CD4-positive, alpha-beta T cell (primary cell): ENCODE measurements at regions of chr9 and their contacts with region 1.

Region 1: GRCh38 chr9:21455320-21455719 is 15.1 kb downstream of the IFNA1 start:
- DNase-seq: peak in 6 of 14 experiments; percentile 2 to 69 (median 39)
- ATAC-seq: peak; percentile 89
- H3K4me3 ChIP-seq: no peak overlapping the region
- H3K4me3 Mint-ChIP-seq: no peak overlapping the region
- H3K27ac ChIP-seq: no peak overlapping the region
- H3K27ac Mint-ChIP-seq: no peak overlapping the region
- H3K4me1 ChIP-seq: no peaks in the 10 kb centered on the region
- H3K4me1 Mint-ChIP-seq: no peaks in the 10 kb centered on the region
- H3K27me3 ChIP-seq: no peaks in the 10 kb centered on the region
- H3K27me3 Mint-ChIP-seq: peaks cover 24% of the 10 kb centered on the region
- CTCF ChIP-seq: peak; percentile 56

Region 2: DNA sequence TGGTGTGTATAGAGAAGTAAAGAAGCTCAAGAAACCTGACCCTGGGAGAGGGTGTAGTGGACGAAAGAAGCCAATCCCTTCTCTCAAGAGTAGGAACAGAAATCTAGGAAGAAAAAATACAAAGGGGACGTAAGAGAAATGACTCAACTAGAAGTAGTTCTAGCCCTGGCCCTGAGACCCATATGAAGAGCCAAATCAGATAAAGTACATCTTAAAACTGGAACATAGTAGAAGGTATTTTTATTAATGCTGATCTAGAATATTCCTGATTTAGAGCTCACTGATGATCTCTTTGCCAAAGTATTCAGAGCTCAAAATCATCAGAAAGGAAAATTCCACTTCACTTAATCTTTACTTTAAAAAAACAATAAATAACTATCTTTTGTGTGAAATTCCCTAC is 1017.8 kb before region 1 on chr9:
- CTCF ChIA-PET with region 1: no interaction called
- POLR2A ChIA-PET with region 1: no interaction called
- intact Hi-C with region 1: no loop called
- DNase-seq: no peak
- ATAC-seq: no peak
- H3K4me3 ChIP-seq: no peak overlapping the region
- H3K4me3 Mint-ChIP-seq: no peak overlapping the region
- H3K27ac ChIP-seq: no peak overlapping the region
- H3K27ac Mint-ChIP-seq: no peak overlapping the region
- H3K4me1 ChIP-seq: no peaks in the 10 kb centered on the region
- H3K4me1 Mint-ChIP-seq: peaks cover 43% of the 10 kb centered on the region
- H3K27me3 ChIP-seq: no peaks in the 10 kb centered on the region
- H3K27me3 Mint-ChIP-seq: no peaks in the 10 kb centered on the region
- CTCF ChIP-seq: no peak

Region 3: GRCh38 chr9:21434202-21435014 is 20.9 kb before region 1 on chr9:
- CTCF ChIA-PET with region 1: interaction called, 10 read pairs
- POLR2A ChIA-PET with region 1: interaction called, 6 read pairs
- intact Hi-C with region 1: loop called in 1 of 2 experiments (anchors 1 kb)
- DNase-seq: peak in 10 of 14 experiments; percentile 20 to 73 (median 34)
- ATAC-seq: peak; percentile 37
- H3K4me3 ChIP-seq: no peak overlapping the region
- H3K4me3 Mint-ChIP-seq: no peak overlapping the region
- H3K27ac ChIP-seq: no peak overlapping the region
- H3K27ac Mint-ChIP-seq: no peak overlapping the region
- H3K4me1 ChIP-seq: no peaks in the 10 kb centered on the region
- H3K4me1 Mint-ChIP-seq: no peaks in the 10 kb centered on the region
- H3K27me3 ChIP-seq: peaks cover 0 to 2% of the 10 kb centered on the region in 2 experiments
- H3K27me3 Mint-ChIP-seq: peaks cover 30% of the 10 kb centered on the region
- CTCF ChIP-seq: peak; percentile 76